H1 (cell line): ENCODE measurements at regions of chr2 and their contacts with region 1.

Region 1: DNA sequence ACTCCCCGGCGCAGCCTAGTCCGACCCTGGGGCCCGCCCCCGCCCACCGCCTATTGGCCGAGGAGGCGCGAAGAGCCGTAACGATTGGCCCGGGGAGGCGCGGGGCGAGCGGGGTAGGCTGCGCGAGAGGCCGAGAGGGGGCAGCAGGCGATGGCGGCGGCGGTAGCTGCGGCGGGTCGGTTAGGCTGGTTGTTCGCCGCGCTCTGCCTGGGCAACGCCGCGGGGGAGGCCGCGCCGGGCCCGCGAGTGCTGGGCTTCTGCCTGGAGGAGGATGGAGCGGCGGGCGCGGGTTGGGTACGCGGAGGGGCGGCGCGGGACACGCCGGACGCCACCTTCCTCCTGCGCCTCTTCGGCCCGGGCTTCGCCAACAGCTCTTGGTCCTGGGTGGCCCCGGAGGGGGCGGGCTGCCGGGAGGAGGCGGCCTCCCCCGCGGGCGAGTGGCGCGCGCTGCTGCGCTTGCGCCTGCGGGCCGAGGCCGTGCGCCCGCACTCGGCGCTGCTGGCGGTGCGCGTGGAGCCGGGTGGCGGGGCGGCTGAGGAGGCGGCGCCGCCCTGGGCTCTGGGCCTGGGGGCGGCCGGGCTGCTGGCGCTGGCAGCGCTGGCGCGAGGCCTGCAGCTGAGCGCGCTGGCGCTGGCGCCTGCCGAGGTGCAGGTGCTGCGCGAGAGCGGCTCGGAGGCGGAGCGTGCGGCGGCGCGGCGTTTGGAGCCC is at the start of gene CNNM3:
- DNase-seq: peak; percentile 64 to 98
- H3K4me3 ChIP-seq: peak within 1 kb of the TSS; percentile 65 to 89 (median 72)
- H3K27ac ChIP-seq: peak within 1 kb of the TSS; percentile 85; the same call in 1 of the 2 replicates
- H3K4me1 ChIP-seq: peaks cover 0 to 22% (median 16%) of the 10 kb centered on the region in 4 experiments; a peak in 6 of 7 replicates
- H3K27me3 ChIP-seq: no peaks in the 10 kb centered on the region; a peak in 1 of 7 replicates
- CTCF ChIP-seq: peak; percentile 26 to 76 (median 66); a peak in 3 of 4 replicates
- EP300 ChIP-seq: no peak
- POLR2A ChIP-seq: 0 out of 3 replicates have a peak, but pooled peaks of 1 of the 2 experiments have one; percentile 25
- RAD21 ChIP-seq: peak in 1 of 2 experiments; percentile 13; a peak in 2 of 4 replicates
- total RNA-seq, gene CNNM3: 29.2 and 29.9 TPM in 2 replicates

Region 2: GRCh38 chr2:96832754-96833507 is 16.6 kb after region 1 on chr2:
- CTCF ChIA-PET with region 1: interaction called, 30 read pairs
- POLR2A ChIA-PET with region 1: interaction called, 12 read pairs
- DNase-seq: peak in 1 of 2 experiments; percentile 86
- H3K4me3 ChIP-seq: peak overlapping the region; percentile 5 to 50 (median 18); a peak in 7 of 8 replicates
- H3K27ac ChIP-seq: peak overlapping the region; percentile 69
- H3K4me1 ChIP-seq: peaks cover 3 to 18% (median 13%) of the 10 kb centered on the region in 4 experiments
- H3K27me3 ChIP-seq: no peaks in the 10 kb centered on the region
- CTCF ChIP-seq: no peak
- EP300 ChIP-seq: no peak
- POLR2A ChIP-seq: no peak; a peak in 1 of 3 replicates
- RAD21 ChIP-seq: no peak